Activated CD8-positive, alpha-beta memory T cell treated with anti-CD3 and anti-CD28 coated beads, Interleukin-2, amount 10 ng/mL, durations not matched to agents 7 days and 5 days (primary cell): ENCODE measurements at regions of chr4 and their contacts with region 1.

Region 1: GRCh38 chr4:121484633-121485032 is 103.8 kb upstream of the QRFPR start:
- DNase-seq: no peak
- ATAC-seq: peak; percentile 84
- H3K4me3 Mint-ChIP-seq: no peak overlapping the region
- H3K27ac Mint-ChIP-seq: no peak overlapping the region
- H3K4me1 Mint-ChIP-seq: no peaks in the 10 kb centered on the region
- H3K27me3 Mint-ChIP-seq: peaks cover 36% of the 10 kb centered on the region

Region 2: GRCh38 chr4:121380776-121381462 is 103.7 kb before region 1 on chr4 and contains the start of gene QRFPR:
- CTCF ChIA-PET with region 1: no interaction called
- DNase-seq: no peak
- ATAC-seq: peak; percentile 46
- H3K4me3 Mint-ChIP-seq: peak within 1 kb of the TSS; percentile 61
- H3K27ac Mint-ChIP-seq: no peak within 1 kb of the TSS
- H3K4me1 Mint-ChIP-seq: peaks cover 7% of the 10 kb centered on the region
- H3K27me3 Mint-ChIP-seq: peaks cover 76% of the 10 kb centered on the region
- total RNA-seq, gene QRFPR: not detected

Region 3: GRCh38 chr4:121656269-121656641 is 171.6 kb after region 1 on chr4:
- CTCF ChIA-PET with region 1: interaction called, 12 read pairs
- DNase-seq: peak; percentile 53
- ATAC-seq: peak; percentile 39
- H3K4me3 Mint-ChIP-seq: no peak overlapping the region
- H3K27ac Mint-ChIP-seq: no peak overlapping the region
- H3K4me1 Mint-ChIP-seq: peaks cover 4% of the 10 kb centered on the region
- H3K27me3 Mint-ChIP-seq: peaks cover 2% of the 10 kb centered on the region

Region 4: GRCh38 chr4:121764707-121765593 is 280.3 kb after region 1 on chr4 and contains the start of gene SMIM43:
- CTCF ChIA-PET with region 1: no interaction called
- DNase-seq: no peak
- ATAC-seq: peak; percentile 51
- H3K4me3 Mint-ChIP-seq: peak within 1 kb of the TSS; percentile 59
- H3K27ac Mint-ChIP-seq: no peak within 1 kb of the TSS
- H3K4me1 Mint-ChIP-seq: peaks cover 8% of the 10 kb centered on the region
- H3K27me3 Mint-ChIP-seq: peaks cover 78% of the 10 kb centered on the region
- total RNA-seq, gene SMIM43: 0.18 TPM in 1 of 2 experiments, not detected in the other